KBM-7 (cell line): ENCODE measurements at regions of chr15 and their contacts with region 1.

Region 1: GRCh38 chr15:67863442-67863987 is 23.7 kb upstream of the RNU6-1 start:
- DNase-seq: peak; percentile 94

Region 2: GRCh38 chr15:68177742-68178141 is 314.2 kb after region 1 on chr15:
- in situ Hi-C with region 1: loop called (anchors 10 kb)
- DNase-seq: no peak